AG04450 (cell line): ENCODE measurements at regions of chr1 and their contacts with region 1.

Region 1: DNA sequence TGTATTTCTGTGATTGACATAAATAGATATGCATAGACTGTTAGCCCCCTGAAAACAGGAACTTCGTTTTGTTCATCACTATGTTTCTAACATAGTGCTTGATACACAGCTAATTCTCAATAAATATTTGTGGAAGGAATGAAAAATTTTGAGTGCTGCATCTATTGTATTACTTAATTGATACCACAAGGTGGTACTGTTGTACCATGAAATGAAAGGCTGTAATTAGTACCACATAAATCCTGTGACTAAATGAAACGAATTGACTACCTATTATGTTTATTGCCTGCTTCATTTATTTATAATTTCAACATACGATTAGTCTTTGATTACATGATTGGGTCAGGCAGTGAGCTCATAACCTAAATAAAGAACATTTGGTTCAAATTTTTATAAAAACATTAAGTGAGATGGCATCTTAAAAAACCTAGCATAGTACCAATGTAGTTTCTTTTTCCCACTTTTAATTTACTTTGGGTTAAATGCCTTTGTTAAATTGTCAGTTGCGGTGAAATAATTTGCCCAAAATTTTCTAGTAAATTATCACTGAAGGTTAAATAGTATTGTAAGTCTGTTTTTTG is 15.0 kb upstream of the TGFB2 start:
- DNase-seq: no peak
- H3K4me3 ChIP-seq: no peak overlapping the region
- H3K27ac ChIP-seq: no peak overlapping the region
- H3K27me3 ChIP-seq: no peaks in the 10 kb centered on the region
- CTCF ChIP-seq: peak; percentile 55

Region 2: GRCh38 chr1:218299416-218299815 is 30.7 kb before region 1 on chr1:
- CTCF ChIA-PET with region 1: interaction called, 32 read pairs
- POLR2A ChIA-PET with region 1: no interaction called
- DNase-seq: peak; percentile 51
- H3K4me3 ChIP-seq: no peak overlapping the region
- H3K27ac ChIP-seq: no peak overlapping the region
- H3K27me3 ChIP-seq: no peaks in the 10 kb centered on the region
- CTCF ChIP-seq: peak; percentile 72

Region 3: DNA sequence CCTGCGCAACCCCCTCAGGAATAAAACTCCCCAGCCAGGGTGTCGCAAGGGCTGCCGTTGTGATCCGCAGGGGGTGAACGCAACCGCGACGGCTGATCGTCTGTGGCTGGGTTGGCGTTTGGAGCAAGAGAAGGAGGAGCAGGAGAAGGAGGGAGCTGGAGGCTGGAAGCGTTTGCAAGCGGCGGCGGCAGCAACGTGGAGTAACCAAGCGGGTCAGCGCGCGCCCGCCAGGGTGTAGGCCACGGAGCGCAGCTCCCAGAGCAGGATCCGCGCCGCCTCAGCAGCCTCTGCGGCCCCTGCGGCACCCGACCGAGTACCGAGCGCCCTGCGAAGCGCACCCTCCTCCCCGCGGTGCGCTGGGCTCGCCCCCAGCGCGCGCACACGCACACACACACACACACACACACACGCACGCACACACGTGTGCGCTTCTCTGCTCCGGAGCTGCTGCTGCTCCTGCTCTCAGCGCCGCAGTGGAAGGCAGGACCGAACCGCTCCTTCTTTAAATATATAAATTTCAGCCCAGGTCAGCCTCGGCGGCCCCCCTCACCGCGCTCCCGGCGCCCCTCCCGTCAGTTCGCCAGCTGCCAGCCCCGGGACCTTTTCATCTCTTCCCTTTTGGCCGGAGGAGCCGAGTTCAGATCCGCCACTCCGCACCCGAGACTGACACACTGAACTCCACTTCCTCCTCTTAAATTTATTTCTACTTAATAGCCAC is 15.7 kb after region 1 on chr1:
- CTCF ChIA-PET with region 1: interaction called, 18 read pairs
- POLR2A ChIA-PET with region 1: interaction called, 7 read pairs
- DNase-seq: no peak
- H3K4me3 ChIP-seq: peak overlapping the region; percentile 75
- H3K27ac ChIP-seq: peak overlapping the region; percentile 80
- H3K27me3 ChIP-seq: no peaks in the 10 kb centered on the region
- CTCF ChIP-seq: no peak

Region 4: GRCh38 chr1:219189021-219189824 is 859.1 kb after region 1 on chr1:
- CTCF ChIA-PET with region 1: interaction called, 11 read pairs
- POLR2A ChIA-PET with region 1: no interaction called
- DNase-seq: peak; percentile 27
- H3K4me3 ChIP-seq: no peak overlapping the region
- H3K27ac ChIP-seq: no peak overlapping the region
- H3K27me3 ChIP-seq: no peaks in the 10 kb centered on the region
- CTCF ChIP-seq: no peak

Region 5: GRCh38 chr1:219416594-219417238 is 1086.6 kb after region 1 on chr1:
- CTCF ChIA-PET with region 1: interaction called, 10 read pairs
- POLR2A ChIA-PET with region 1: no interaction called
- DNase-seq: no peak
- H3K4me3 ChIP-seq: no peak overlapping the region
- H3K27ac ChIP-seq: no peak overlapping the region
- H3K27me3 ChIP-seq: no peaks in the 10 kb centered on the region
- CTCF ChIP-seq: peak; percentile 76

Region 6: DNA sequence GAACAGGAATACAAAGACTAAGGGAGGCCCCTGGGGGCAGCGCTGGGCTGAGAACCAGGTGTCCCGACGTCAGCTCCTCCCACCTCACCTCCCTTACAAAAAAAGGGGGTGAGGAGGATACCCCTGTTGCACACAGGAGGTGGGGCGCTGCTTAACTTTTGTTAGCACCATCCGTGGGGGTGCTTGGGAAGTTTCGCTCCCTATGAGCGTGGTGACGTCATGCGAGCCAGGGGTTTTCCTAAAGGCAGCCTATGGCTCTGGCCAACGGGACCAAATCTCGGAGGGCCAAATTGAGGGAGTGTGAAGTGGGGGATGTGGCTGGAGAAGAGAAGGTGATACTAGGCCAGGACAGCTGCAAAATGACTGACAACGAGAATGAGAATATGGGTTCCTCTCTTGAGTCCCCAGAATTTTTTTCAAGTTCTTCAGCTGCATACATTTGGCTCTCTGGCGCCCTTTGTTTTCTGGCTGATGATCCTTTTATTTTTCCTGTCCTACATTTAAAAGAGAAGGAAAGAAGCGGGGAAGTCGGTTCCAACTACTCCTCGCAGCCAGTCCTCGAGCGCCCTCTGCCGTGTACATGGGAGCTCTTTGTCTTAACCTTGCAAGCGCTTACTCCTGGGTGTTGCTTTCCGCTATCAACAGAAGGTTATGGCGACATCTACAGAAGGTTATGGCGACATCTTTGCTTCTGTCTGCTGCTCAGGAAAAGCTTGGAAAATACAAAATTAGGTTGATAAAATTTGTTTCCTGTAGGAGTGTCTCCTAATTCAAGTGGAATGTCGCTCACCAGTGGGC is 1330.7 kb after region 1 on chr1:
- CTCF ChIA-PET with region 1: interaction called, 18 read pairs
- POLR2A ChIA-PET with region 1: no interaction called
- DNase-seq: peak; percentile 74
- H3K4me3 ChIP-seq: peak overlapping the region; percentile 20
- H3K27ac ChIP-seq: no peak overlapping the region
- H3K27me3 ChIP-seq: no peaks in the 10 kb centered on the region
- CTCF ChIP-seq: peak; percentile 94